ENCODE measurements at regions of chr18 and their contacts with region 1.

Region 1: DNA sequence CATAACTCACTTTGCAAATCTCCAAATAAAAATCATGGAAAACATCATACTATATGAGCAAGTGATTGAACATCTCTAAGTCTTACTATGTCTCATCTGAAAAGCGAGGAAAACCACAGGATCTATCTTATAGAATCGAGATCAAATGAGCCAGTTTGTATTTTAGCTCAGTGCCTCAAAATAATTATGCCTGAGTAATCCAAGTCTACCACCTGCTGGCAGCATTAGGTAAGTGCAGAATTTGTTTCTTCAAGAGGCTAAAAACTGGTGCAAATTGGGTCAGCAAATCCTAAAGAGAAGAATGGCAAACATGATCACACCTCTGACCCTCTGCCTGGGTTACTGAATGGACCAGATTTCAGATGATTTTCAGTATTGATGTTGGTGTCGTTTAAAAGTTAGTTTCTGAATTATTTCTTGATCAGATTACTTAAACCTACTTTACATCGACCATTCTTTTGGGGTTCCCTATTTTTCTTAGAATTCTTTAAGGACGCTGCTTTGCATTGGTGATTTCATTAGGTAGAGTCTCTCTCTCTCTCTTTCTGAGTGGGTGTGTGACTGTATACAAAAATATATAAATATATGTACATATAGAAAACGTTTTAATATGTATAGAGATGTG is 12.7 kb upstream of the FHOD3 start:
- DNase-seq: no peak
- ATAC-seq: no peak

Region 2: DNA sequence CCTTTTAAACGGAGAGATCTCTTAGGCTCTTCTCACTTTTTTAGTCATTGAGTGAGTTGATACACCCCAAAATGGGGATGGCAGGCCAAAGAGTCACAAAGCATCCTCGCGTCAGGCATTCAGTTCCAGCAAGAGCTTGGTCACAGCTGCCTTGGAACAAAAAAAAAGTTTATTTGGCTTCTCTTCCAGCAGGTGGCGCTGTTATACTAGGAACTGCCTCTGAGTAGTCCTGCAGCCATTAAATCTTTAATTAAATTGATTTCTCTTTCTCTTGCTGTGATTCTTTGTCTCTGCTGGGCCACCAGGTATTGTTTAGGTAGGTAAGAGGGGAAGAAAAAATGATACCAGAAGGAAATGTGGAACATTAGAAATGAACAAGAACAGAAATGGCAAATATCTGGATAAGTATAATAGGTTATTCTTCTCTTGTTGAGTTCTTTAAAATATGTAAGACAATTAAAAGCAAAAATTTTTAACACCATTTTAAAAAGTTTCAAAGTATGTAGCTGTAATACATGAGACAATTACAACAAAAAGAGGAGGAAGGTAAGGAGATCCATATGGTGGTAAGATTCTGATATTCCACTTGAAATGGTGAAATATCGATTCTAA is 528.2 kb before region 1 on chr18:
- intact Hi-C with region 1: loop called (anchors 5 kb)
- DNase-seq: no peak
- ATAC-seq: peak; percentile 64

Region 3: DNA sequence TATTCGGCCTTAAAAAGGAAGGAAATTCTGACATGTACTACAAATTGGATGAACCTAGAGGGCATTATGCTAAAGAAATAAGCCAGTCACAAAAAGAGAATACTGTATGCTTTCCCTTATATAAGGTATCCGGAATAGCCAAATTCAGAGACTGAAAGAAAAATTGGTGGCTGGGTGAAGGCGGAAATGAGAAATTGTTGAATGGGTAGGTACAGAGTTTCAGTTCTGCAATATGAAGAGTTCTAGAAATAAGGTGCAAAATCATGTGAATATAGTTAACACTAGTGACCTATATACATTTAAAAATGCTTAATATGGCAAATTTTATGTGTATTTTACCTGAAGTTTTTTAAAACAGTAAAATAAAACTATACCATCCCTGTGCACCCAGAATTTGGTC is 269.2 kb before region 1 on chr18:
- intact Hi-C with region 1: loop called (anchors 2 kb)
- DNase-seq: no peak
- ATAC-seq: no peak

Region 4: GRCh38 chr18:36095936-36096519 is 188.8 kb before region 1 on chr18:
- intact Hi-C with region 1: loop called (anchors 1 kb)
- DNase-seq: no peak
- ATAC-seq: no peak

Region 5: GRCh38 chr18:36186911-36187834 is 97.6 kb before region 1 on chr18 and contains the start of gene MOCOS:
- intact Hi-C with region 1: loop called (anchors 5 kb)
- DNase-seq: peak; percentile 90
- ATAC-seq: peak; percentile 94
- total RNA-seq, gene MOCOS: 0.38 TPM